Mammary epithelial cell (primary cell): ENCODE measurements at regions of chr9 and their contacts with region 1.

Region 1: DNA sequence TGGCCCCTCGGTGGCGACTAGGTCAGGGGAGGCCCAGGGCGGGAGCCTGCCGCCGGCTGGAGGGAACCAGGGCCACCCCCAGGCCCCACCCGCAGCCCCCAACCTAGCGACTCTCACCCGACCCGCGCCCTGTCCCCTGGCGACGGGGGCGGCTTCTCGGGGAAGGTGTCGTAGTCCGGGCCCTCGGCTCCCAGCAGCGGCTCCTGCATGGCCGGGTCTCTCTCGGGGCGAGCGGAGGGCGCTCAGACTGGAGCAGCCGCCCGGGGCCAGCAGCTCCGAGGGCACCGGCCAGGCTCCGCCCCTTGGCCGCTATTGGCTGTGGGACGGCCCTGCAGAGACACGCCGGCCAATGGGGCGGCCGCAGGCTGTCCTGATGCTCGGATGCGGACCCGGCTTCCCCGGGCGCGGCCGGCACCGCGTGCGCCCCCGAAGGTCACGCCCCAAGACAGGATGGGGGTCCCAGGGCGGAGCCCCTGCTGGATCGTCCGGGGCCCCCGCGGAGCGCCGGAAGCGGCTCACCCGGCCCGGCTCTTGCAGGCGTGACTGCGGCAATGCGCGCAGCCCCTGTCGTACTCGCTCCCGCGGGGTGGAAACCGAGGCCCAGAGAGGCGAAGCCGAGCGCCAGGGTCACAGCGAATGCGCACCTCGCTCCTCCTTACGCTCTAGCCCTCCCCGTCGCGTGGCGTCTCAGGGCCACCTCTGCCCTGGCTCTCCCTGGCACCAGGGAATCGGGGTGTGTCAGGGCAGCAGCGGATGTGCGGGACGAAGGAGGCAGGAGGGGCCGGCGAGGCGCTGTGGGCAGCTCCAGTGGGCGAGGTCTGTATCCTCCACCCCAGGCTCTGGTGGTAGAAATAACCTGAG is at the start of gene SLC2A6:
- DNase-seq: peak; percentile 78
- H3K4me3 ChIP-seq: peak within 1 kb of the TSS; percentile 67 to 84 (median 77)
- H3K27ac ChIP-seq: peak within 1 kb of the TSS; percentile 68
- H3K4me1 ChIP-seq: peaks cover 23% of the 10 kb centered on the region
- H3K27me3 ChIP-seq: no peaks in the 10 kb centered on the region
- CTCF ChIP-seq: no peak
- total RNA-seq, gene SLC2A6: 24.7 to 31.3 TPM

Region 2: DNA sequence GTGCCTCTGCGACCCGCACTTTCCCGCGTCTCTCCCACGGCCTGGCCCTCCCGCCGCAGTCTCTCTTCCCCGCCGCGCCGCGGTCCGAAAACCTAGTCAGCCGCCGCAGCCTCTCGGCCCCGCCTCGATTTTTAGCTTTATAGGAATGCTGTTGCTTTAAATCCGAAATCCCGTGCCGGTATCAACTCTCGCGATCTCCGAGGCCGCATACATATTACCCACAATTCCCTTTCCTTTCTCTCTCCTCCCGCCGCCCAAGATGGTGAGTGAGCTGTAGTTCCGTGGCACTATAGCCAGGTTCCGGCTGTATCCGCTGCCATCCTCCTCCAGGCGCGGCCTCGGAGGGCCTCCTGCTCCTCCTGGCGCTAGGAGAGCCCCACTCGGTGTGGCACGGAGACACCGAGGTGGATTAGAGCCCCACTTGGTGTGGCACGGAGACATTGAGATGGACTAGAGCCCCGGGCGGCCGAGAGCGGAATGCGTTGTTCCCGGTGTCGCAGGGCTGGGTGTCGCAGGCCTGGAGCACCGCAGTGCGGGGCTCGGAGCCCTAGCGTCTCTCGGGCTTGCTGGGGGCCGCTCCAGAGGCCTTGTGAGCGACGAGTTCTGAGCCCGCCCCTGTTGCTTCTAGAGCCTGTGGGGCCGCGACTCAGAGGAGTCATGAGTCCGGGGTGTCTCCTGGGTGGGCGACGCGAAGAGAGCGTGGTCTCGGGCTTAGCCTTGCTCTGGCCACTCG is 130.9 kb before region 1 on chr9 and contains the starts of genes MED22 and RPL7A:
- CTCF ChIA-PET with region 1: no interaction called
- dilution Hi-C with region 1: no loop called
- in situ Hi-C with region 1: no loop called
- intact Hi-C with region 1: loop called (anchors 5 kb)
- DNase-seq: peak; percentile 93
- H3K4me3 ChIP-seq: peak within 1 kb of the TSS; percentile 82 to 98 (median 87)
- H3K27ac ChIP-seq: peak within 1 kb of the TSS; percentile 89
- H3K4me1 ChIP-seq: peaks cover 17% of the 10 kb centered on the region
- H3K27me3 ChIP-seq: no peaks in the 10 kb centered on the region
- CTCF ChIP-seq: no peak
- total RNA-seq, gene MED22: 17.2 to 35.4 TPM
- total RNA-seq, gene RPL7A: 1,339 to 1,542 TPM

Region 3: DNA sequence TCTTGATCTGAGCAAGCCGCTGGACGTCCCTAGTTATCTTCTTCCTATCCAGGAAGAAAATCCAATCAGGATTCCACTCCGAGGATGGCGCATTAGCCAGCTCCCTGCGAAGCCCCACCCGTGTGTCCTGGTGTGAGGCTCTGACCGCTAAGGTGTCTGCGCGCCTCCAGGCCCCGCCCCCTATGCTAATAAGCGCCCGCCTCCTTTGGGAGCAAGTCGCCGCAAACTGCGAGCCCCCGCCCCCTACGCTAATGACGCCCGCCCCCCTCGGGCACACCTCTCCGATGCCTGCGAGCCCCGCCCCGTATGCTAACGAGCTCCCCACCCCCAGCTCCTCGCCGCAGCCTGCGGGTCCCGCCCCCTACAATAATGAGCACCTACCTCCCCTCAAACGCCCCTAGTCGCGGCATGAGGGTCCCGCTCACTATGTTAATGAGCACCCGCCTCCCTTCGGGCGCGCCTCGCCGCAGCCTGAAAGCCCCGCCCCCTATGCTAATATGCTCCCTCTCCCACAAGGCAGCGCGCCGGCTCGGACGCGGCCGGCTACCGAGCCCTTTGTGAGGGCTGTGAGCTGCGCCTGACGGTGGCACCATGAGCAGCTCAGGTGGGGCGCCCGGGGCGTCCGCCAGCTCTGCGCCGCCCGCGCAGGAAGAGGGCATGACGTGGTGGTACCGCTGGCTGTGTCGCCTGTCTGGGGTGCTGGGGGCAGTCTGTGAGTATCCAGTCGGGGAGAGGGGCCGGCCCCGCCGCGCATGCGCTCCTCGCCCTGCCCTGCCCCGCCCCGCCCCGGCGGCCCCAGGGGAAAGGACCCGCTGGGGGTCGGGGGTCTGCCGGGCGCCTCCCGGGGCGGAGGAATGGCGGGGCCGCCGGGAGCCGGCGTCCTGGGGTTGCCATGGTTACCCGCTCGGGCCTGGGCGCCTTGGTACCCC is 19.3 kb before region 1 on chr9 and contains the start of gene CACFD1:
- CTCF ChIA-PET with region 1: no interaction called
- dilution Hi-C with region 1: no loop called
- in situ Hi-C with region 1: no loop called
- intact Hi-C with region 1: loop called (anchors 1 kb)
- DNase-seq: peak; percentile 91
- H3K4me3 ChIP-seq: peak within 1 kb of the TSS; percentile 66 to 86 (median 66)
- H3K27ac ChIP-seq: peak within 1 kb of the TSS; percentile 55
- H3K4me1 ChIP-seq: peaks cover 10% of the 10 kb centered on the region
- H3K27me3 ChIP-seq: no peaks in the 10 kb centered on the region
- CTCF ChIP-seq: no peak
- total RNA-seq, gene CACFD1: 4.4 to 6.8 TPM